ENCODE measurements at regions of chr14 and their contacts with region 1.

Region 1: DNA sequence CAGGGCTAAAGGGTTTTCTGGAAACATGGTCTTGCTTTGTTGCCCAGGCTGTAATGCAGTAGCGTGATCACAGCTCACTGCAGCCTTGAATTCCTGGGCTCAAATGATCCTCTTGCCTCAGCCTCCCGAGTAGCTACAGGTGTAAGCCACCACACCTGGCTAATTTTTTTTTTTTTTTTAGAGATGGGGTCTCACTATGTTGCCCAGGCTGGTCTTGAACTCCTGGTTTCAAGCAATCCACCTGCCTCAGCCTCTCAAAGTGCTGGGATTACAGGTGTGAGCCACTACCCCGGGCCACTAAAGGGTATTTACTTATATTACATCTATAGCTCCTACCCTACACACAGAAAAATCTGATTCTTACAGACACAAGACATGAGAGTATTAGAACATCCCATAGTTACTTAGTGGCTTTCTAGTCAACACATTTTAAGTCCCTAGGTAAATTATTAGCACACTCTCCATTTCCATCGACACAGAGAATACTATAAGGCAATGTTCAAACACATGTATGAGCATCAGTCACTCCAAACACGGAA is 6.2 kb upstream of the DCAF11 start:
- DNase-seq: no peak
- ATAC-seq: peak; percentile 21
- H3K4me3 ChIP-seq: no peak overlapping the region
- H3K4me3 Mint-ChIP-seq: peak overlapping the region; percentile 3 to 68 (median 46)
- H3K27ac ChIP-seq: peak overlapping the region; percentile 66
- H3K27ac Mint-ChIP-seq: peak overlapping the region; percentile 90 to 97 (median 94)
- H3K4me1 ChIP-seq: peaks cover 11 to 12% of the 10 kb centered on the region in 2 donors
- H3K4me1 Mint-ChIP-seq: peaks cover 9 to 28% (median 13%) of the 10 kb centered on the region in 7 donors
- H3K27me3 ChIP-seq: no peaks in the 10 kb centered on the region
- H3K27me3 Mint-ChIP-seq: no peaks in the 10 kb centered on the region

Region 2: GRCh38 chr14:24013654-24014514 is 94.5 kb before region 1 on chr14:
- CTCF ChIA-PET with region 1: interaction called, 5 read pairs
- POLR2A ChIA-PET with region 1: no interaction called
- intact Hi-C with region 1: loop called (anchors 1 kb)
- DNase-seq: peak in 8 of 9 donors; percentile 17 to 76 (median 67)
- ATAC-seq: peak; percentile 94
- H3K4me3 ChIP-seq: no peak overlapping the region
- H3K4me3 Mint-ChIP-seq: no peak overlapping the region
- H3K27ac ChIP-seq: no peak overlapping the region
- H3K27ac Mint-ChIP-seq: no peak overlapping the region
- H3K4me1 ChIP-seq: peaks cover 0 to 6% of the 10 kb centered on the region in 2 donors
- H3K4me1 Mint-ChIP-seq: peaks cover 8 to 28% (median 25%) of the 10 kb centered on the region in 7 donors
- H3K27me3 ChIP-seq: no peaks in the 10 kb centered on the region
- H3K27me3 Mint-ChIP-seq: peaks cover 0 to 15% (median 0%) of the 10 kb centered on the region in 5 donors

Region 3: DNA sequence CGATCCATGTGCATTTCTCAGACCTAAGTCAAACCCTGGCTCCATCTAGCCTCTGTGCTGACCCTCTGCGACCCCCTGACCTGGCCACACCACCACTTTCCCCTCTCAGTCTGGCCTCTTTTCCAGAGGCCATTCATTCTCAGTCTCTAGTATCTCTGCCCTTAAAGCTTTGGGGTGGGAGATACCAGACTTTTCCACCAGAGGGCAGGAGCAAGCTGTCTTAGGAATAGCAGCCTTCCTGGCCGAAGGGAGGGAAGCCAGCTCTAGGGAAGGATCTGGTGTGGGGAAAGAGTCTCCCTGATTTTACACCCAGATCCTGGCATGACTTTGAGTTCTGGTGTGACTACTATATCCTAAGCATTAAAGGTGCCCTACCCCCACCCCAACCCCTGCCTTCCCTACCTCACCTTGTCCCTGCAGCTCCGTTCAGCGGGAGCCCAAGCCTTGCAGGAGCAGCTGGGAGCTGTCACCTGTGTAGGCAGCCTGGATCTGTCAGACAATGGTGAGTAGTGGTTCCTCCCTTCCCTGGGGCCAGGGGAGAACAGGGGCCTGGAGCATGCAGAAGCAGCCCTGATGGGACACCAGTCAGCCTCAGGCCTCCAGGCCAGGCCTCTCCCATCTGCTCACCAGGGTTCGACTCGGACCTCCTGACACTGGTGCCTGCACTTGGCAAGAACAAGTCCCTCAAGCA is 50.0 kb before region 1 on chr14:
- CTCF ChIA-PET with region 1: interaction called, 246 read pairs
- POLR2A ChIA-PET with region 1: interaction called, 31 read pairs
- intact Hi-C with region 1: loop called (anchors 1 kb)
- DNase-seq: peak; percentile 22 to 70 (median 49)
- ATAC-seq: peak; percentile 84
- H3K4me3 ChIP-seq: no peak overlapping the region
- H3K4me3 Mint-ChIP-seq: no peak overlapping the region
- H3K27ac ChIP-seq: no peak overlapping the region
- H3K27ac Mint-ChIP-seq: peak overlapping the region in 5 of 9 donors; percentile 22 to 80 (median 67)
- H3K4me1 ChIP-seq: no peaks in the 10 kb centered on the region
- H3K4me1 Mint-ChIP-seq: peaks cover 0 to 8% (median 2%) of the 10 kb centered on the region in 7 donors
- H3K27me3 ChIP-seq: no peaks in the 10 kb centered on the region
- H3K27me3 Mint-ChIP-seq: peaks cover 0 to 8% (median 2%) of the 10 kb centered on the region in 5 donors

Region 4: GRCh38 chr14:24080888-24081738 is 27.3 kb before region 1 on chr14:
- CTCF ChIA-PET with region 1: interaction called, 43 read pairs
- POLR2A ChIA-PET with region 1: interaction called, 58 read pairs
- intact Hi-C with region 1: loop called (anchors 1 to 2 kb)
- DNase-seq: peak; percentile 46 to 75 (median 72)
- ATAC-seq: peak; percentile 92
- H3K4me3 ChIP-seq: peak overlapping the region; percentile 82
- H3K4me3 Mint-ChIP-seq: peak overlapping the region; percentile 80 to 90 (median 86)
- H3K27ac ChIP-seq: peak overlapping the region; percentile 75
- H3K27ac Mint-ChIP-seq: peak overlapping the region; percentile 32 to 92 (median 85)
- H3K4me1 ChIP-seq: peaks cover 7 to 14% of the 10 kb centered on the region in 2 donors
- H3K4me1 Mint-ChIP-seq: peaks cover 16 to 20% (median 18%) of the 10 kb centered on the region in 7 donors
- H3K27me3 ChIP-seq: no peaks in the 10 kb centered on the region
- H3K27me3 Mint-ChIP-seq: peaks cover 0 to 20% (median 0%) of the 10 kb centered on the region in 5 donors

Region 5: DNA sequence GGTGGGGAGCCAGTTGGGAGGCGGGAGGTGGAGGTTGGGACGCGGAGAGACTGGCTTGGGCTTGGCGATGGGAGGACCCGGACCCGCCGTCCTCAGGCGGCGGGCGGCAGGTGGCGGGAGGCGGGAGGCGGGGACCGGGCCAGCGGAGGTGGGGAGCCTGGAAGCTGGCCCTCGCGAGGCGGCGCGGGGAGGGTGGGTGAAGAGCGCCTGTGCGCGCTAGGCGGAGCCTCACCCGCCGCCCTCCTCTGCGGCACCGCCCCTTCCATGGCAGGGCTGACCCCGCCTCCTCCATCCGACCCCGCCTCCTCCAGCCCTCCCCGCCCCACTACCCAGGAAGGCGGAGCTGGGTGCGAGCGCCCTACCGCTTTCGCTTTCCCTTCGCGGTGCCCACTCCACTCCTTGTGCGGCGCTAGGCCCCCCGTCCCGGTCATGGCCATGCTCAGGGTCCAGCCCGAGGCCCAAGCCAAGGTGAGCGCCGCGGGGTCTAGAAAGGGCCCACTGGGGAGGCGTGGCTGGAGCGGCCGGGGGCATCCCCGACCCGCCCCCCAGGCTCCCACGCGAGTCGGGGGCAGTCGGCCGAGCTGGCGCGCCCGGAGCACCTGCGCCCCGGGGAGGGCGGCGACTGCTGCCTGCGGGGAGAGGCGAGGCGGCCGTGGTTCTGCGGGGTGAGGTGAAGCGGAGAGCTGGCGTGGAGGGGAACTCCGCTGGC is 27.6 kb after region 1 on chr14 and contains the start of gene PSME1:
- CTCF ChIA-PET with region 1: interaction called, 11 read pairs
- POLR2A ChIA-PET with region 1: interaction called, 298 read pairs
- intact Hi-C with region 1: no loop called
- DNase-seq: peak; percentile 88 to 97 (median 92)
- ATAC-seq: peak; percentile 99
- H3K4me3 ChIP-seq: peak within 1 kb of the TSS; percentile 83
- H3K4me3 Mint-ChIP-seq: peak within 1 kb of the TSS; percentile 88 to 95 (median 92)
- H3K27ac ChIP-seq: peak within 1 kb of the TSS; percentile 97
- H3K27ac Mint-ChIP-seq: peak within 1 kb of the TSS; percentile 86 to 98 (median 93)
- H3K4me1 ChIP-seq: peaks cover 16 to 37% of the 10 kb centered on the region in 2 donors
- H3K4me1 Mint-ChIP-seq: peaks cover 48 to 71% (median 64%) of the 10 kb centered on the region in 7 donors
- H3K27me3 ChIP-seq: no peaks in the 10 kb centered on the region
- H3K27me3 Mint-ChIP-seq: no peaks in the 10 kb centered on the region
- total RNA-seq, gene PSME1: 189 to 583 (median 202) TPM

Region 6: GRCh38 chr14:26056217-26056616 is 1947.8 kb after region 1 on chr14:
- CTCF ChIA-PET with region 1: no interaction called
- POLR2A ChIA-PET with region 1: no interaction called
- intact Hi-C with region 1: no loop called
- DNase-seq: no peak
- ATAC-seq: no peak
- H3K4me3 ChIP-seq: no peak overlapping the region
- H3K4me3 Mint-ChIP-seq: no peak overlapping the region
- H3K27ac ChIP-seq: no peak overlapping the region
- H3K27ac Mint-ChIP-seq: no peak overlapping the region
- H3K4me1 ChIP-seq: no peaks in the 10 kb centered on the region
- H3K4me1 Mint-ChIP-seq: no peaks in the 10 kb centered on the region
- H3K27me3 ChIP-seq: no peaks in the 10 kb centered on the region
- H3K27me3 Mint-ChIP-seq: no peaks in the 10 kb centered on the region

Measured in naive thymus-derived CD4-positive, alpha-beta T cell (primary cell).